ENCODE measurements at regions of chr20 and their contacts with region 1.

Region 1: DNA sequence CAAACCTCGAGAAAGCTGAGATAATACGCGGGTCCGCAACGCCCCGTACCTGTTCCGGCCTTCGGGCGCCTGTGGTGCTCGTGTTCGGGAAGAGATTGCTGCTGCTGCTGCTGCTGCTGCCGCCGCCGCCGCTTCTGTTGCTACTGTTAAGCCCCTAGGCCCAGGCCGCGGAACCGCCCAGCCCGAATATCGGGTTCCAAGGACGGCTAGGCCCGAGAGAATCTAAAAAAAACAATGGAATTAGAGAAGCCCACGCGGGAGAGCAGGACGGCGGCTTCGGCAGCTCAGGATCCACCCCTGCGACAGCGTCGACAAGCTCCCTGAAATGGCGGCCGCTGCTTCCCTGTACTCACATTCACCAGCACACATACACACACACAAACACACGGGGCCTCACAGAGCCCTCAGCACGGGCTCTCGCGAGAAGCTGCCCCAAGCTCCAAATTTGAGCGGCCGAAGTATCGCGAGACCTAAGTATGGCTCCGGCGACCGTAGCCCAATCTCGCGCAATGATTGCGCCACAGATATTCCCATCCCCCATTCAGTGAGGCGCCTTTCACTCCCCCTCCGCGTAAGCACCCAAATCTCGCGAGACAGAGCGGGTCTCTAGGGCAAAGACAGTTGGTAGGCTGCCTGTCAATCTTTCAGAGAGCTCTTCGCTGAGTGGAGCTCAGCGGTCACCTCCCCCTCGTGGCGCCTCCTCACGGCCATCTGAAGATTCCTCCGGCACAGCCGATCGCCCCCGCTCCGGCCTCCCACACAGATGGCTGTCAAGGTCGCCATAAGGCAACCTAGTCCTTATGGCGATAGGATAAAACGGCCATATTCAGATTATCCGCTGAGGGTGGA is at the start of gene RBM39:
- DNase-seq: peak; percentile 92 to 100 (median 94)
- ATAC-seq: peak; percentile 91
- H3K4me3 ChIP-seq: peak within 1 kb of the TSS; percentile 81
- H3K27ac ChIP-seq: peak within 1 kb of the TSS; percentile 99
- H3K4me1 ChIP-seq: peaks cover 4 to 23% of the 10 kb centered on the region in 2 experiments; a peak in 3 of 5 replicates
- H3K27me3 ChIP-seq: no peaks in the 10 kb centered on the region
- CTCF ChIP-seq: peak; percentile 29 to 58 (median 41); a peak in 5 of 6 replicates
- EP300 ChIP-seq: peak; percentile 66; the same call in 1 of the 2 replicates
- POLR2A ChIP-seq: peak; percentile 99
- RAD21 ChIP-seq: peak; percentile 13 to 18; a peak in 1 of 4 replicates
- polyA plus RNA-seq, gene RBM39: 143 to 198 TPM

Region 2: GRCh38 chr20:34493646-34494045 is 1248.5 kb before region 1 on chr20:
- CTCF ChIA-PET with region 1: no interaction called
- POLR2A ChIA-PET with region 1: no interaction called
- in situ Hi-C with region 1: no loop called
- intact Hi-C with region 1: no loop called
- DNase-seq: no peak
- ATAC-seq: no peak
- H3K4me3 ChIP-seq: no peak overlapping the region
- H3K27ac ChIP-seq: no peak overlapping the region
- H3K4me1 ChIP-seq: no peaks in the 10 kb centered on the region
- H3K27me3 ChIP-seq: no peaks in the 10 kb centered on the region
- CTCF ChIP-seq: no peak
- EP300 ChIP-seq: no peak
- POLR2A ChIP-seq: no peak
- RAD21 ChIP-seq: no peak

Region 3: DNA sequence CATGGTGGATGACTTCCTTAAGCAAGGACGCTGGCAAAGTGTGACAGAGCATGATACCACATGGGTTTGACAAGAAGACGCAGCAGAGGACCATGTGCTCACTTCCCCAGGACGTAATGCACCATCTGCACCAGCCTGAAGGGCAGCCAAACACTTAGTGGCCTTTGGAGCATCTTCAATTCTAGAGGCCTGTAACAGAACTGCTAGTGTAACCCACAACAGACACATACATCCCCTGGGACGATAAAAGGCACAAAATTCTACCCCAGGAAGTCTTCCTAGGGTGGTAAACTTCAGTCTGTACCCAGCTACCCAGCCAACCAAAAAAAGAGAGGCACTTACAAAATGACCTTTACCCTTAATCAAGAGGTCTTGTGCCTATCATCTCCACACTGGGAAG is 68.2 kb before region 1 on chr20:
- CTCF ChIA-PET with region 1: no interaction called
- POLR2A ChIA-PET with region 1: no interaction called
- in situ Hi-C with region 1: no loop called
- intact Hi-C with region 1: no loop called
- DNase-seq: no peak
- ATAC-seq: no peak
- H3K4me3 ChIP-seq: no peak overlapping the region
- H3K27ac ChIP-seq: no peak overlapping the region
- H3K4me1 ChIP-seq: no peaks in the 10 kb centered on the region
- H3K27me3 ChIP-seq: no peaks in the 10 kb centered on the region
- CTCF ChIP-seq: no peak
- EP300 ChIP-seq: no peak
- POLR2A ChIP-seq: no peak
- RAD21 ChIP-seq: no peak

Region 4: GRCh38 chr20:35718972-35719635 is 23.0 kb before region 1 on chr20:
- CTCF ChIA-PET with region 1: no interaction called
- POLR2A ChIA-PET with region 1: interaction called, 21 read pairs
- in situ Hi-C with region 1: no loop called
- intact Hi-C with region 1: no loop called
- DNase-seq: no peak
- ATAC-seq: no peak
- H3K4me3 ChIP-seq: no peak overlapping the region
- H3K27ac ChIP-seq: no peak overlapping the region
- H3K4me1 ChIP-seq: no peaks in the 10 kb centered on the region
- H3K27me3 ChIP-seq: no peaks in the 10 kb centered on the region
- CTCF ChIP-seq: no peak
- EP300 ChIP-seq: no peak
- POLR2A ChIP-seq: no peak; the same call in 1 of the 2 replicates
- RAD21 ChIP-seq: no peak

Region 5: GRCh38 chr20:35757098-35757705 is 15.1 kb after region 1 on chr20:
- CTCF ChIA-PET with region 1: no interaction called
- POLR2A ChIA-PET with region 1: interaction called, 46 read pairs
- in situ Hi-C with region 1: no loop called
- intact Hi-C with region 1: no loop called
- DNase-seq: peak in 1 of 4 experiments; percentile 18
- ATAC-seq: peak; percentile 73
- H3K4me3 ChIP-seq: no peak overlapping the region
- H3K27ac ChIP-seq: no peak overlapping the region
- H3K4me1 ChIP-seq: peaks cover 0 to 4% of the 10 kb centered on the region in 2 experiments; a peak in 2 of 5 replicates
- H3K27me3 ChIP-seq: no peaks in the 10 kb centered on the region
- CTCF ChIP-seq: no peak
- EP300 ChIP-seq: no peak
- POLR2A ChIP-seq: no peak
- RAD21 ChIP-seq: no peak

Region 6: DNA sequence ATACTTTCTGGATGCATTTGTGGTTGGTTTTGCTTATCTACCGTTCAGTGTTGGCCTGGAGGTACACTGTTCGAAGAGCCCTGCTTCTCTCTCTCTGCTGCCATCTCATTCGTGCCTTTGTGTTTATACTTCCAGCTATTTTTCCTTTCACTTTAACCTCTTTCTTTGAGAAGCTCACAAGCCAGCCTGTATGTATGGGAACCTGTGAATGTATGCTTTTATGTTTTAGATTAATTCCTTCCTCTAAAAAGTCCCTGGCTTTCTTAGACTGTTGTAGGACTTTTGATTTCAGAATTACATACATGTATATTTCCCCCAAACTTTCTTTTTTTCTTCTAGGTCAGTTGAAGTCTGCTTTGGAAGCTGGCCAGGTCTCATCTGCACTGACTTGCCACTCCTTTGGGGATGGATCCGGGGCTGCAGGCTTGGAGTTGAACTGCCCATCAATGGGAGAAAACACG is 129.2 kb after region 1 on chr20:
- CTCF ChIA-PET with region 1: no interaction called
- POLR2A ChIA-PET with region 1: interaction called, 16 read pairs
- in situ Hi-C with region 1: no loop called
- intact Hi-C with region 1: no loop called
- DNase-seq: peak in 1 of 4 experiments; percentile 51
- ATAC-seq: peak; percentile 59
- H3K4me3 ChIP-seq: no peak overlapping the region
- H3K27ac ChIP-seq: peak overlapping the region; percentile 50; the same call in 1 of the 3 replicates
- H3K4me1 ChIP-seq: peaks cover 6 to 23% of the 10 kb centered on the region in 2 experiments
- H3K27me3 ChIP-seq: no peaks in the 10 kb centered on the region
- CTCF ChIP-seq: no peak
- EP300 ChIP-seq: no peak
- POLR2A ChIP-seq: no peak
- RAD21 ChIP-seq: no peak

Region 7: DNA sequence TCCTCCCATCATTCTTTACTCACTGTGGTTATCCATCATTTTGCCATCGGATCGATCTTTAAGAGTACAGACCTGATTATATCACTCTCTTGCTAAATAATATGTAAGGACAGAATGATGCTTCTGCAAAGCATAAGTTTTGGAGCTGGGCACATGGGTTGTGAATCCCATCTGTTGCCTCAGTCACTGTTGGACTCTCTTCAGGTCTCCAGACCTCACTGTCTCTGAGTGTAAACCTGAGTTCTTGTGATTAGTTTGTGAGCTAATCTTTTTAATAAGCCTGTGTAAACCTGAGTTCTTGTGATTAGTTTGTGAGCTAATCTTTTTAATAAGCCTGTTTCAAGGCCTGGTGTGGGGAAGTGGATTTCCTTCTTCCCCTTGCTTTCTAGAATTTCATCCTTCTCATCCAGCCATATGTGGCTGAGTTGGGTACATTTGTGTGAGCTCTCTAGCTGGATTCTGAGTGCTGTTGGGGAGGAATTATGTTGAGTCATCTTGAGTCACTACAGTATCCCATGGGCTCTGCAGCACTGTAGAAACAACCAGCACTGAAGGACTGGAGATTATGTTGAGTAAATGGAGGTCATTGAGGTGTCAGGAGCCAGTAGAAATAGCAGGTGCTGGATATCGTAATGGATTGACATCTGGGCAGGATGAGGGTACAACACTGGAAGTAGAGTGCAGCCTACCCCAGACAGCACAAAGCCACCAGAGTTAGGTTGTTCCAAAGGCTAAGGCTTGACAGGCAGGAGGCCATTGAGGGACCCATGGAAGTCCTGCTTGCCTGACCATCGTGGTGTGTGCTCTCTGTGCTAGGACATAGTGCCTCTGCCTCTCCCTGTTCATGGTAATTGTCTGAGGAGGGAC is 159.8 kb after region 1 on chr20:
- CTCF ChIA-PET with region 1: no interaction called
- POLR2A ChIA-PET with region 1: interaction called, 22 read pairs
- in situ Hi-C with region 1: no loop called
- intact Hi-C with region 1: loop called (anchors 5 kb)
- DNase-seq: peak; percentile 49 to 85 (median 68)
- ATAC-seq: peak; percentile 94
- H3K4me3 ChIP-seq: no peak overlapping the region
- H3K27ac ChIP-seq: peak overlapping the region; percentile 78
- H3K4me1 ChIP-seq: peaks cover 19 to 41% of the 10 kb centered on the region in 2 experiments; a peak in 4 of 5 replicates
- H3K27me3 ChIP-seq: no peaks in the 10 kb centered on the region
- CTCF ChIP-seq: no peak
- EP300 ChIP-seq: peak; percentile 48
- POLR2A ChIP-seq: 0 out of 2 replicates have a peak, but pooled peaks have one; percentile 42
- RAD21 ChIP-seq: no peak